Kidney (tissue), 22 donors: ENCODE measurements at regions of chr3 and their contacts with region 1.

Region 1: DNA sequence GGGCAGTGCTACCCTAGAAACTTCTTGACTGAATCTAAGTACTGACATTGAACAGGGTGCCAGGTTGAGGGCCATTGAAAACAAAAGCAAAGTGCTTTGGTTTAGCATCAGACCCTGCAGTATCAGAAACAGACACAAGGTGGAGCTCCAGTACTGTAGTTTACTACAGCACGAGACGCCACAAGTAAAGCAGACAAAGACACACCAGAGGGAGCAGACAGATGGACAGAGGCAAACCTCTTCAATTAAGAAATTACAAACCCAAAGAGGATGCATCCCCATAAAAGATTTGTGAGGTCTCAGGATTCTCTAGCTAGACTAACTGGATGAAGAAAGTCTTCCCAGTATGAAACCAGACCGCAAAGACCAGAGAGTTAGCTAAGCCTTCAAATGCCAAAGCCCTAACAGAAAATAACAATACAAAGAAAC is 16.6 kb downstream of the TOP2B start:
- DNase-seq: peak in 4 of 5 donors; percentile 63 to 75 (median 70)
- H3K4me3 ChIP-seq: no peak overlapping the region
- H3K27ac ChIP-seq: no peak overlapping the region
- H3K4me1 ChIP-seq: peaks cover 0 to 6% (median 0%) of the 10 kb centered on the region in 3 donors
- H3K27me3 ChIP-seq: no peaks in the 10 kb centered on the region
- CTCF ChIP-seq: peak; percentile 91

Region 2: GRCh38 chr3:25856902-25857518 is 208.9 kb after region 1 on chr3:
- intact Hi-C with region 1: loop called (anchors 10 kb)
- DNase-seq: peak in 2 of 5 donors; percentile 18 to 34
- H3K4me3 ChIP-seq: no peak overlapping the region
- H3K27ac ChIP-seq: no peak overlapping the region
- H3K4me1 ChIP-seq: no peaks in the 10 kb centered on the region
- H3K27me3 ChIP-seq: no peaks in the 10 kb centered on the region
- CTCF ChIP-seq: peak; percentile 55